Motor neuron (in vitro differentiated cells): ENCODE measurements at regions of chr20 and their contacts with region 1.

Region 1: GRCh38 chr20:50366270-50367103 is 143.7 kb upstream of the PTPN1 start:
- ATAC-seq: peak; percentile 19 to 83 (median 74)
- H3K4me3 ChIP-seq: no peak overlapping the region
- H3K27ac ChIP-seq: no peak overlapping the region
- H3K4me1 ChIP-seq: no peaks in the 10 kb centered on the region

Region 2: GRCh38 chr20:50224531-50225255 is 141.8 kb before region 1 on chr20:
- in situ Hi-C with region 1: loop called in 1 of 9 experiments (anchors 25 kb)
- ATAC-seq: peak in 7 of 8 experiments; percentile 54 to 87 (median 76)
- H3K4me3 ChIP-seq: no peak overlapping the region
- H3K27ac ChIP-seq: no peak overlapping the region
- H3K4me1 ChIP-seq: no peaks in the 10 kb centered on the region